ENCODE measurements at regions of chr20 and their contacts with region 1.

Region 1: DNA sequence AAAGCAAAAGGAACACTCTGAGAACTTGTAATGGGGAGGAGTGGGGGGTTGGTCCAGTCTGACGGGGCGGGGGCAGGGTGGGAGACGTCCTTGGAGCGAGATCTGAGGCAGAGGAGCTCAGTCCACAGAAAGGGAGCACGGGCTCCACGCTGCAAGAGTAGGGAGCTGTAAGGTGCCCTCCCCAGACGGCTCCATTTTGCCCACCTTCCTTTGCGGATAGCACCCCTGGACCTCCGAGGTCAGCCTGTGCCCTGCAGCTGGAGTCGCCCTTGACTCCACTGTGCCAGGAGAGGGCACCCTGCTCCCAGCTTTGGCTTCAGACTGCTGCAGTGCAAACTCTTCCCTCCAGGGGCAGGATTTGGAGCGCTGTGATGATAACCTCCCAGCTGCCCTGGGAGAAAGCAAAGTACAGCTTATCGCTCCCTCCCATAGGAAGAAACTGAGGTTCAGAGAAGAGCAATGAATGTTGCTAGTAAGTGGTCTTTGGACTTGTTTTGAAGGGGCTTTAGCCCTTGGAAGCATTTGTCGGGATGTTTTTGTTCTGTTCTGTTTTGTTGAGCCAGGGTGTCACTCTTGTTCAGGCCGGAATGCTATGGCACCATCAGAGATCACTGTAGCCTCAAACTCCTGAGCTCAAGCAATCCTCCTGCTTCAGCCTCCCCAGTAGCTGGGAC is 9.5 kb upstream of the AHCY start:
- DNase-seq: peak; percentile 90
- H3K4me3 Mint-ChIP-seq: no peak overlapping the region
- H3K27ac Mint-ChIP-seq: no peak overlapping the region
- H3K4me1 Mint-ChIP-seq: peaks cover 20% of the 10 kb centered on the region
- H3K27me3 Mint-ChIP-seq: peaks cover 22% of the 10 kb centered on the region

Region 2: GRCh38 chr20:34199183-34199582 is 113.5 kb before region 1 on chr20:
- CTCF ChIA-PET with region 1: no interaction called
- POLR2A ChIA-PET with region 1: no interaction called
- DNase-seq: no peak
- H3K4me3 Mint-ChIP-seq: no peak overlapping the region
- H3K27ac Mint-ChIP-seq: no peak overlapping the region
- H3K4me1 Mint-ChIP-seq: peaks cover 11% of the 10 kb centered on the region
- H3K27me3 Mint-ChIP-seq: peaks cover 36% of the 10 kb centered on the region

Region 3: DNA sequence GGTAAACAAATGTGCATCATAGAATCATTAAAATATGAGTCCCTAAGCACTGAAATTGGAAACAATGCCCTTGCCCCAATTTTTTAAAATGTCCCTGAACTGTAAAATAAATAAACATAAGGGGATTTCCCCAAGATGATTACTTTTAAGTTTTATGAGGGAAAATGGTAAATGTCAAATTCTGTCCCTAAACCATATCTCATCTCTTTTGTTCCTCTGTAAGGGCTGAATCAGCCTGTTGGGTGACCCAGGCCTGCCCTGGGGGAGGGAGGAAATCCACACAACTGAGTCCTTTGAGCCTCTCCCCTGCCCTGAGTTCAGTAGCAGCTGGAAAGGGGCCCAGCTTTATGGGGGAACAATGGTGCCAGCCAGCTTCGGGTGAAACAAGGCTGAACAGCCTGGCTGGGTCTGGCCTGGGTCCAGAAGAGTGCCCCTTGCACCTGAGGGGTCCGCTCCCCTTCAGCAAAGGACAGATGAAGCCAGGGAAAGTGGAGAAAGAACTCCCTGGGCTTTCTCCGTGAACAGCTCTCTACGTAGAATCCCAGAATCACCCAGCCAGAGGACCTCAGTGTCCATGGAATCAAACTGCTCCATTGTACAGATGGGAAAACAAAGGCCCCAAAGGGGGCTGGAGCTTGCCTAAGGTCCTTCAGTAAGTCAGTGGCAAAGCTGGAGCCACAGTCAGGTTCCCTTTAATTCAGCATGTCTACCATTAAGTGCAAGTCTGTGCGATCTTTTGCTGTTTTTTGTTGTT is 22.1 kb after region 1 on chr20:
- CTCF ChIA-PET with region 1: interaction called, 10 read pairs
- POLR2A ChIA-PET with region 1: no interaction called
- DNase-seq: no peak
- H3K4me3 Mint-ChIP-seq: no peak overlapping the region
- H3K27ac Mint-ChIP-seq: no peak overlapping the region
- H3K4me1 Mint-ChIP-seq: peaks cover 3% of the 10 kb centered on the region
- H3K27me3 Mint-ChIP-seq: no peaks in the 10 kb centered on the region

Region 4: GRCh38 chr20:34415079-34415478 is 102.4 kb after region 1 on chr20:
- CTCF ChIA-PET with region 1: interaction called, 10 read pairs
- POLR2A ChIA-PET with region 1: no interaction called
- DNase-seq: no peak
- H3K4me3 Mint-ChIP-seq: no peak overlapping the region
- H3K27ac Mint-ChIP-seq: no peak overlapping the region
- H3K4me1 Mint-ChIP-seq: peaks cover 21% of the 10 kb centered on the region
- H3K27me3 Mint-ChIP-seq: no peaks in the 10 kb centered on the region

Region 5: DNA sequence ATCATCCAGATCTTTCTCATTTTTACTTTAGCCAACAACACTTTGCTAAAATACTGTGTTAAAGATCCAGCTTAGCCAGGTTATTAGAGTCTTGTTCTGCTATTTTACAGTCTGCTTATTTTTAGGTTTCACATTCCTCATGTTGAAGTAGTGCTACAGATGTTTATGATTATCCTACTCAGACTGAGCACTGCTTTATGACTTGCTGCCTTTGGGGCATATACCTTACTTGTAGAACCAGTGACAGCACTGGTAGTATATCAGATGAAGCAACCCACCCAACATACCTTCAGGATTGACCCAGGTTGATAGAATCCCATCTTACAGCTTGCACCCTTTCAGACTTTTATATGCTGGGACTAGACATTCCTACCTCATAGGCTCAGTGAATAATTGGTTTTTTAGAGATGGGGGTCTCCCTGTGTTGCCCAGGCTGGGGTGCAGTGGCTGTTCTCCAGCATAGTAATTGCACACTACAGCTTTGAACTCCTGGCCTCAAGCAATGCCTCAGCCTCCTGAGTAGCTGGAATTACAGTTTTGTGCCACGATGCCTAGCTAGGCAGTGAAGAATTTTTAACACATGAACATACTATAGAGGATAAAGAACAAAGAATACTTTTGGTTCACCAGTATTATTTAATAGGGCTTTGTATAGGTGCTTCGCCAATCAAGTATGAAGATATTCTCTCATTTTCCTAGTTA is 139.8 kb after region 1 on chr20:
- CTCF ChIA-PET with region 1: interaction called, 32 read pairs
- POLR2A ChIA-PET with region 1: no interaction called
- DNase-seq: no peak
- H3K4me3 Mint-ChIP-seq: no peak overlapping the region
- H3K27ac Mint-ChIP-seq: no peak overlapping the region
- H3K4me1 Mint-ChIP-seq: peaks cover 7% of the 10 kb centered on the region
- H3K27me3 Mint-ChIP-seq: no peaks in the 10 kb centered on the region

Region 6: DNA sequence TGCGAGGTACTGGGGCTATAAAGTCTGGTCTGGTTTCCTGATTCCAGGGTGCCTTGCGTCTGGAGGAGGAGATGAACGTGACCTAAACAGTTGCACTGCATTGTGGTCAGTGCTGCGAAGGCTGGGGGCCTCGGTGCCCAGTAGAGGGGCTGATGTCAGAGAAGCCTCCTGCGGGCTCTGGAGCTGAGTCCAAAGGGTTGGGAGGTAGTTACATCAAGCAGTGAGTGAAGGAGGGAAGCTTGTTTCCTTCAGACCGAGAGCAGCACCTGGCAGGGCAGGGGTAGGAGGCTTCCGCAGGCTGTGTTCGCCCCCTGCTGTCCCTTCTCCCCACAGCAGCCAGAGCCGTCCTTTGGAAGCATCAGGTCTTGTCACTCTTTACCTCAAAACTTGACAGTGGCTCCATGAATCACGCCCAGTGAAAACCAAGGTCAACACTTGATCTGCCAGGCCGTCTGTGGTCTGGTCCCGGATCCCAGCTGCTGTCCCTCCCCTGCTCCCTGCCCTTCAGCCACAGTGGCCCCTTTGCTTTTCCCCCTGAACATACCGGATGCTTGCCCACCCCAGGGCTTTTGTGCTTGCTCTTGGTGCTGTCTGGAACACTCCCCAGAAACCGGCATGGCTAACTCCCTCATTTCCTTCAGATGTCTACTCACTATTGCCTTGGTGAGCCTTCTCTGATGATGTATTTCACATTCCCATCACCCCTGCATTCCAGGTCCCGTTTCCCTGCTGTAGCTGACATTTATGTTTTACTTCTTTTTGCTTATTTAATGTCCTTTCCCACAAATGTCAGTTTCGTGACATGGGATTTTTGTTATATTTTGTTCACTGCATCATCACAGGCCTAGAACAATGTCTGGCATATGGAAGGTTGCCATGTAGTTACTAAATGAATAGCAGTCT is 210.5 kb after region 1 on chr20:
- CTCF ChIA-PET with region 1: interaction called, 109 read pairs
- POLR2A ChIA-PET with region 1: interaction called, 3 read pairs
- DNase-seq: peak; percentile 55
- H3K4me3 Mint-ChIP-seq: no peak overlapping the region
- H3K27ac Mint-ChIP-seq: no peak overlapping the region
- H3K4me1 Mint-ChIP-seq: peaks cover 23% of the 10 kb centered on the region
- H3K27me3 Mint-ChIP-seq: no peaks in the 10 kb centered on the region

Region 7: GRCh38 chr20:34544109-34544793 is 231.6 kb after region 1 on chr20:
- CTCF ChIA-PET with region 1: interaction called, 28 read pairs
- POLR2A ChIA-PET with region 1: no interaction called
- DNase-seq: no peak
- H3K4me3 Mint-ChIP-seq: no peak overlapping the region
- H3K27ac Mint-ChIP-seq: no peak overlapping the region
- H3K4me1 Mint-ChIP-seq: peaks cover 21% of the 10 kb centered on the region
- H3K27me3 Mint-ChIP-seq: no peaks in the 10 kb centered on the region

Measured in activated CD4-positive, alpha-beta memory T cell treated with anti-CD3 and anti-CD28 coated beads, Interleukin-2, amount 10 ng/mL, durations not matched to agents 7 days and 5 days (primary cell).